Panc1 (cell line): ENCODE measurements at regions of chr6 and their contacts with region 1.

Region 1: DNA sequence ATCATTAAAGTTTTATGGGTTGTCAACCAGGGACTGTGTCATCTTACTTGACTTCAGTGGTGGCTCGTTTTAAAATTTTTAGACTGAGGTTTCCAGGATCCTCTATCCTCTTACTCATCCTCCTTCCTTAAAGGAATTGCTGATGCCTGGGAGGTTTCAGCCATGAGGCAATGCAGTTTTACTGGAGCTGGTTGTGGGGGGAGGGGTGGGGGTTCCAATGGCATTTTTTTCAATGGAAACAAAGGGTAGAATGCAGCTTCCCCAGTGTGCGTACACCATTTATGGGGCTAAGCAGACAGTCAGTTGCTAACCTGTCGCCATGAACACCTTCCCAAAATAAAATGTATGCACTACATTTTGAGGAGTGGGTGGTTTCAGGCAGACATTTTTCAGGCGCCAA is 88.0 kb downstream of the METTL24 start:
- DNase-seq: no peak
- ATAC-seq: no peak
- H3K4me3 ChIP-seq: no peak overlapping the region
- H3K27ac ChIP-seq: no peak overlapping the region
- H3K4me1 ChIP-seq: no peaks in the 10 kb centered on the region
- H3K27me3 ChIP-seq: peaks cover 11% of the 10 kb centered on the region
- CTCF ChIP-seq: no peak

Region 2: DNA sequence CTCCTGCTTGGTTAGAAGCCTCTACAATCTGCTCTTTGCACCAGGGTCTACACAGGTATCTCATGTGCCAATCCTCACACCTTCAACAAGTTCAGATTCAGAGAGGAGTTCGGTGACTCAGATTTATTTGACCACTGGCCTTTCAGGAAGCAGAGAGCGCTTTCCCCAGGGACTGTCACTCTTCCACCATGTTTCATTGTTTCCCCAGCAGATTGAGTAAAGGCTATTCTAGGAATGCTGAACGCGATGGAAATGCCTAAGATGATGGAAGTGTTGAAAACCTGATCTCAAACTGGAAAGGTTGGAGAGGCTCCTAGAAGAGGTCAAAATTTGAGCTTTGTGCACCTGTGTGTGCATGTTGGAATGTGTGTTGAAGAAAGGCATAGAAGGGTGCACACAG is 368.7 kb before region 1 on chr6:
- CTCF ChIA-PET with region 1: no interaction called
- POLR2A ChIA-PET with region 1: no interaction called
- in situ Hi-C with region 1: no loop called
- intact Hi-C with region 1: no loop called
- DNase-seq: no peak
- ATAC-seq: no peak
- H3K4me3 ChIP-seq: no peak overlapping the region
- H3K27ac ChIP-seq: no peak overlapping the region
- H3K4me1 ChIP-seq: no peaks in the 10 kb centered on the region
- H3K27me3 ChIP-seq: peaks cover 17% of the 10 kb centered on the region
- CTCF ChIP-seq: no peak

Region 3: DNA sequence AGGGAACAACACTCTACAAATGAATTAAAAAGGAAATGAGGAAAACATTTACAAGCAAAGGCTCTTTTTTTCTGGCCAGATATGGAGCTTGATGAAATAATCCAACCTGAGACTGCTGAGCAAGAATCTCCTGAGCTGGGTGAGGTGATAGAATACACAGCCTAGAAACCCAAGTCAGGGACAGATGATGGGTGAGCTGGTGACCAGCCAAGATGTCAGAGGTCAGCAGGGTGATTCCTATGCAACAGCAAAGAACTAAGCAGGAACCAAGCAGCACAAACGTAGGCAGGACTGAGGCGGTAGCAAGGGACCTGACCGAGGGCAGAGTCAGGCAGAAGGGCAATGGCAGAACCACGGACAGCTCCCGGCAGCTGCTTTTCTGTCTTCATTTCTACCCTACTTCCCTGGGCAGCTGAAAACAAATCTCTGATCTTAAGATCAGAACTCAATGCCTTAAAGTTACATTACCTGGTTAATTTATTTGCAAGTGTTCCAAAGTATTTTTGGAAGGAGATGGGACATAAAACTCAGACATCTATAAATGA is 14.9 kb before region 1 on chr6:
- CTCF ChIA-PET with region 1: no interaction called
- POLR2A ChIA-PET with region 1: no interaction called
- in situ Hi-C with region 1: no loop called
- intact Hi-C with region 1: loop called (anchors 1 kb)
- DNase-seq: no peak
- ATAC-seq: no peak
- H3K4me3 ChIP-seq: no peak overlapping the region
- H3K27ac ChIP-seq: no peak overlapping the region
- H3K4me1 ChIP-seq: no peaks in the 10 kb centered on the region
- H3K27me3 ChIP-seq: peaks cover 5% of the 10 kb centered on the region
- CTCF ChIP-seq: no peak

Region 4: GRCh38 chr6:111291336-111292259 is 1021.4 kb after region 1 on chr6:
- CTCF ChIA-PET with region 1: no interaction called
- POLR2A ChIA-PET with region 1: no interaction called
- in situ Hi-C with region 1: no loop called
- intact Hi-C with region 1: no loop called
- DNase-seq: no peak
- ATAC-seq: 0 out of 2 replicates have a peak, but pooled peaks have one; percentile 27
- H3K4me3 ChIP-seq: no peak overlapping the region
- H3K27ac ChIP-seq: no peak overlapping the region
- H3K4me1 ChIP-seq: no peaks in the 10 kb centered on the region
- H3K27me3 ChIP-seq: no peaks in the 10 kb centered on the region
- CTCF ChIP-seq: no peak